Heart left ventricle (tissue), 16 donors: ENCODE measurements at regions of chr2 and their contacts with region 1.

Region 1: DNA sequence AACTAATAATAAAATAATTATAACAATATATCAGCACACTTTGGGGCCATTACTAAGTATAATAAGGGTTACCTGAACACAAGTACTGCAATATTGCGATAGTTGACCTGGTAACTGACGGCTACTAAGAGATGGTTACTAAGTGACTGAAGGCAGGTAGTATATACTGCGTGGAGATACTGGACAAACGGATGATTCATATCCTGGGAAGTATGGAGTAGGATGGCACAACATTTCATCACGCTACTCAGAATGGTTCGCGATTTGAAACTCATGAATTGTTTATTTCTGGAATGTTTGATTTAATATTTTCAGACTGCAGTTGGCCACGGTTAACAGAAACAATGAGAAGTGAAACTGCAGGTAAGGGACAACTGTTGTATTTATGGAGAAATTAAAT is 39.5 kb upstream of the FLACC1 start:
- DNase-seq: no peak
- ATAC-seq: no peak
- H3K4me3 ChIP-seq: no peak overlapping the region
- H3K27ac ChIP-seq: no peak overlapping the region
- H3K4me1 ChIP-seq: peaks cover 0 to 15% (median 6%) of the 10 kb centered on the region in 12 donors
- H3K27me3 ChIP-seq: no peaks in the 10 kb centered on the region
- CTCF ChIP-seq: no peak
- POLR2A ChIP-seq: no peak

Region 2: DNA sequence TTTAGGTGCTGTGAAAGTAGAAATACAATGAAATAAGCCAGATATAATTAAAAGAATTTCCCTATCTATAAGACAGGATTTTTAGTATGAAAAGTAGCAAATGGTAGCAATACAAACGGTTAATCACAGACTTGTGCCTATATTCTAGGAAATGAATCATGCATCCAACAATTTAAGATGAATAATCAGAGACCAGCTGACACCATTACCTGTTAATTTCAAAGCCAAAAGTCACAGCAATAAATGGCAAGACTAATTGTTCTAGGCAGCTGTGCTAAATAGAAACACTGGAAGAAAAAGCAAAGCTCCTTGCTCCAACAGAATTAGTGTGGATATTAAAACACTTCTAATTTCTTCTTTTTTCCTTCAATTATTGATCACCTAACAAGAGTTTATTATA is 336.9 kb after region 1 on chr2:
- intact Hi-C with region 1: loop called in 1 of 10 experiments (anchors 10 kb)
- DNase-seq: no peak
- ATAC-seq: no peak
- H3K4me3 ChIP-seq: no peak overlapping the region
- H3K27ac ChIP-seq: no peak overlapping the region
- H3K4me1 ChIP-seq: no peaks in the 10 kb centered on the region
- H3K27me3 ChIP-seq: no peaks in the 10 kb centered on the region
- CTCF ChIP-seq: no peak
- POLR2A ChIP-seq: no peak